GM12878 (cell line): ENCODE measurements at regions of chrX and their contacts with region 1.

Region 1: GRCh38 chrX:149205937-149206336 is 299.2 kb downstream of the IDS start:
- DNase-seq: no peak
- ATAC-seq: peak; percentile 59
- H3K4me3 ChIP-seq: no peak overlapping the region
- H3K27ac ChIP-seq: peak overlapping the region; percentile 49; the same call in 1 of the 2 replicates
- H3K4me1 ChIP-seq: no peaks in the 10 kb centered on the region
- H3K27me3 ChIP-seq: no peaks in the 10 kb centered on the region
- CTCF ChIP-seq: no peak
- EP300 ChIP-seq: no peak
- POLR2A ChIP-seq: no peak
- RAD21 ChIP-seq: no peak

Region 2: GRCh38 chrX:148976571-148977400 is 229.2 kb before region 1 on chrX:
- CTCF ChIA-PET with region 1: no interaction called
- POLR2A ChIA-PET with region 1: no interaction called
- RAD21 ChIA-PET with region 1: no interaction called
- SMC1A ChIA-PET with region 1: no interaction called
- in situ Hi-C with region 1: no loop called
- intact Hi-C with region 1: no loop called
- DNase-seq: no peak
- ATAC-seq: no peak
- H3K4me3 ChIP-seq: no peak overlapping the region
- H3K27ac ChIP-seq: no peak overlapping the region
- H3K4me1 ChIP-seq: no peaks in the 10 kb centered on the region
- H3K27me3 ChIP-seq: no peaks in the 10 kb centered on the region
- CTCF ChIP-seq: no peak
- EP300 ChIP-seq: no peak
- POLR2A ChIP-seq: no peak
- RAD21 ChIP-seq: no peak

Region 3: DNA sequence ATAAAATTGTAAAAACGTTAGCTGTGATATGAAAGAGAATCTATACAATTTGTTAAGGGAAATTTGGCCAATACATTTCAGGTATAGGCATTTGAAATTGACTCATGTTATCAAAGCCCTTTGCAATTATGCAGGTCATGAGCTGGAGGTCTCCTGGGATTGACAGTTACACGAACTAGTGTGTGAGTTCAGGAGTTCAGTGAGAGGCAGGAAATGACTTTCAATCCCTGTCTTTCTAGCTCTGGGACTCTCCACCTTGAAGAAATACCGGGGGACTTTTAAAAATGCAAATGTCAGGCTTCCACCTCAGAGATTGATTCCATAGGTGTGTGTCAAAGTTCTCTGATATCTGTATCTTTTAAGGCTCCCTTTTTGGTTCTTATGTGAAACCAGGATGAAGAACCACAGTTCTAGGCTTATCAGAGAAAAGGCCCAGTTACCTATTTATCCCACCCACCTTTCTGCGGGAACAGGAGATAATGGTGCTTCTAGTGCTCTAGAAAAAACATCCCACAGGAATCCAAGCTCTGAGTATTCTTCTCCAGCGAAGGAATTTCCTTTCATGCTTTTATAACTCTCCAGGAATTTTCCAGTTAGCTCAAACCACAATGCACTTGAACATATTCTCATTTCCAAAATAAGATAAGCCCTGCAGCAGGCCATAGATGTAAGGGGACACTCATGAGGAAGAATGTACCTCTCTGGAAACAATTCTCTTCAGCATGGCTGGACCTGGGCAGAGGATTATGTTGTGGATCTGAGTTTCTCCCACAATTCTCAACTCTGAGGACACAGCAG is 201.9 kb before region 1 on chrX:
- CTCF ChIA-PET with region 1: interaction called, 3 read pairs
- POLR2A ChIA-PET with region 1: interaction called, 3 read pairs
- RAD21 ChIA-PET with region 1: interaction called, 12 read pairs
- SMC1A ChIA-PET with region 1: interaction called, 6 read pairs
- in situ Hi-C with region 1: no loop called
- intact Hi-C with region 1: no loop called
- DNase-seq: peak; percentile 26
- ATAC-seq: peak; percentile 71
- H3K4me3 ChIP-seq: no peak overlapping the region
- H3K27ac ChIP-seq: no peak overlapping the region
- H3K4me1 ChIP-seq: no peaks in the 10 kb centered on the region; the same call in 1 of the 2 replicates
- H3K27me3 ChIP-seq: no peaks in the 10 kb centered on the region
- CTCF ChIP-seq: no peak
- EP300 ChIP-seq: peak in 1 of 2 experiments; percentile 47; a peak in 1 of 4 replicates
- POLR2A ChIP-seq: no peak
- RAD21 ChIP-seq: no peak

Region 4: DNA sequence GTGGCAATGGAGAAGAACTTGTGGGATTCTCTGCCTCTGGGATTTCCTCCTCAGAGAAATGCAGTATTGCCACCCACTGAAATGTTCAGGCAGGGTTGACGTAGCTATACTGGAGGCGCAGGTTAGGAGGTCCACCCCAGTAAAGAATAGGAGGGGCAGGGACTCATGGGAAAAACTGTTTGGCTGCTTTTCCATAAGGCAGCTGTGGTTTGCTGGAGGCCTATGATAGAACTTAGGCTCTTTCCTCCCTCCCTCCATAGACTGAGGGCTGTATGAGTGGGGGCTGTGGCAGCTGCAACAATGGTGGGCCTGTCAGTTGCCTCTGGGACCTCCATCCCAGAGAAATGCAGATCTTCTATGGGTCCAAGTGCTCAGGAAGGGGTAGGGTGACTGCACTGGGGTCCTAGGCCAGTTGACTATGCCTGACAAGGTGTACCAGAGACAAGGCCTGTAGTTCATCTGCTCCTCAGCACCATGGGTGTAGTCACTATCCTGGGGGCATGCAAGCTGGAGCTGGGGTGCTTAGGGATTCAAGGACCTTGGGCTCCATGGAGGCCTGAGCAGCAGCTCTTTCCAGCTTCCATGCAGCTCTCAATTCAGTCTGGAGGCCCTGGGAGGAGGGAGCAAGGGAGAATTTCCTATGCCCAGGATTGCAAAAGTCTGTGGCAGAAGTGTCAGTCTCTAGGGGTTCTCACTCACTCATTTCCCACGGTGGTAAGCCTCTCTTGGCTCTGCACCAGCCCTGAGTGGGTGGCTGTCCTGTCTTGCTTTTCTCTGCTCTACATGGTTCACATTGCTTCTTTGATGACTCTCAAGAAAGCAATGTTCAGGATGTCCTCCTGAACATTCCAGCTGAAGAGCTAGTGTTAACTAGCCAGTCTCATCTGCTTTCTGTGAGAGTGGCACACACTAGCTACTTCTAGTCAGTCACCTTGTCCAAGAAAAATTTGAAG is 53.9 kb before region 1 on chrX:
- CTCF ChIA-PET with region 1: interaction called, 3 read pairs
- POLR2A ChIA-PET with region 1: interaction called, 7 read pairs
- RAD21 ChIA-PET with region 1: interaction called, 13 read pairs
- SMC1A ChIA-PET with region 1: interaction called, 77 read pairs
- in situ Hi-C with region 1: no loop called
- intact Hi-C with region 1: no loop called
- DNase-seq: peak; percentile 24
- ATAC-seq: peak; percentile 85
- H3K4me3 ChIP-seq: no peak overlapping the region
- H3K27ac ChIP-seq: no peak overlapping the region
- H3K4me1 ChIP-seq: no peaks in the 10 kb centered on the region
- H3K27me3 ChIP-seq: no peaks in the 10 kb centered on the region
- CTCF ChIP-seq: no peak
- EP300 ChIP-seq: no peak
- POLR2A ChIP-seq: no peak
- RAD21 ChIP-seq: no peak

Region 5: DNA sequence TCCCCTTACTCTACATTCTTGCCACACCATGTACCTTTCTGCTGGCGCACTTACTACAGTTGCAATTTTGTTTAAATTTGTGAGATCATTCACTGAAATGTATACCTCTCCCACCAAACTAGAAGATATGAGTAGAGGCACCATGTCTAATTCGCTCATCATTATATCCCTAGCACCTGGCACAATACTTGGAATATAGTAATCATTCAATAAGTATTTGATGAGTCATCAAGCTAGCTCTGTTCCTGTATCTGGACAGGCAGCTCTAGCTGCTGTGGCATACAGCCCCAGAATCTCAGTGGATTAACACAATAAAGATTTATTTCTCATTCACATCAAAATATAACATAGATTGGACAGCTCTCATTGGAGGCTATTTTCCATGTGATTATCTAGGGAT is 53.3 kb after region 1 on chrX:
- CTCF ChIA-PET with region 1: no interaction called
- POLR2A ChIA-PET with region 1: no interaction called
- RAD21 ChIA-PET with region 1: interaction called, 17 read pairs
- SMC1A ChIA-PET with region 1: interaction called, 44 read pairs
- in situ Hi-C with region 1: no loop called
- intact Hi-C with region 1: no loop called
- DNase-seq: no peak
- ATAC-seq: no peak
- H3K4me3 ChIP-seq: no peak overlapping the region
- H3K27ac ChIP-seq: no peak overlapping the region
- H3K4me1 ChIP-seq: no peaks in the 10 kb centered on the region
- H3K27me3 ChIP-seq: no peaks in the 10 kb centered on the region
- CTCF ChIP-seq: no peak
- EP300 ChIP-seq: no peak
- POLR2A ChIP-seq: no peak
- RAD21 ChIP-seq: no peak

Region 6: DNA sequence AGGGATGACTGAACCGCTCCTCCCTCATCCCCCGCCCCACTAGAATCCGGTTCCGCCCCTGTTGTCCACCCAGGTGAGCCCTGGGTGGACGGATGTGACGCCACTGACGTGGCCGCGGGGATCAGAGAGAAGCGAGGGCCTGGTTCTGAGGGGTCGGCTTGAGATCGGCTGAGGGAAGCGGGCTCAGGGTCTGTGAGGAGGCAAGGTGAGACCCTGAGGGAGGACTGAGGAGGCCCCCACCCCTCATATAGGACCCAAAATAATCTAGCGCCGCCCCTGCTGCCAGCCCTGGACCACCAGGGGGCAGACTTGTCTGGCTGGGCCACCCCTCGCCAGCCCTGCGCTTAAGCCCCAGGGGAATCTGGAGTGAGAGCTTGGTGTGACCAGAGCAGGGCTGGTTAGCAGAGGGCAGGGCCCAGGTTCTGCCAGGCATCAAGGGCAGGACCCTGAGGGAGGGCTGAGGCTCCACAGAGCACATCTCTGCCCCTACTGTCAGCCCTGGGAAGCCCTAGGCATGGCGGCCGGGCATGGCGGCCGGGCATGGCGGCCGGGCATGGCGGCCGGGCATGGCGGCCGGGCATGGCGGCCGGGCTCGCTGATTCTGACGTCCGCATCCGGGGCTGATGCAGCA is 675.3 kb after region 1 on chrX and contains the start of gene MAGEA8:
- CTCF ChIA-PET with region 1: no interaction called
- POLR2A ChIA-PET with region 1: no interaction called
- RAD21 ChIA-PET with region 1: no interaction called
- SMC1A ChIA-PET with region 1: no interaction called
- in situ Hi-C with region 1: no loop called
- intact Hi-C with region 1: loop called (anchors 10 kb)
- DNase-seq: no peak
- ATAC-seq: no peak; the same call in 2 of the 3 replicates
- H3K4me3 ChIP-seq: no peak within 1 kb of the TSS
- H3K27ac ChIP-seq: no peak within 1 kb of the TSS
- H3K4me1 ChIP-seq: no peaks in the 10 kb centered on the region
- H3K27me3 ChIP-seq: no peaks in the 10 kb centered on the region
- CTCF ChIP-seq: peak in 2 of 3 experiments; percentile 24 to 34; a peak in 3 of 6 replicates
- EP300 ChIP-seq: no peak
- POLR2A ChIP-seq: no peak
- RAD21 ChIP-seq: peak; percentile 36
- polyA plus RNA-seq, gene MAGEA8: 0.13 TPM in 1 of 2 experiments, not detected in the other